Right ventricle myocardium superior (tissue), 1 donor: ENCODE measurements at regions of chr18 and their contacts with region 1.

Region 1: GRCh38 chr18:61754039-61754583 is 138.7 kb downstream of the RNF152 start:
- DNase-seq: no peak
- ATAC-seq: no peak

Region 2: DNA sequence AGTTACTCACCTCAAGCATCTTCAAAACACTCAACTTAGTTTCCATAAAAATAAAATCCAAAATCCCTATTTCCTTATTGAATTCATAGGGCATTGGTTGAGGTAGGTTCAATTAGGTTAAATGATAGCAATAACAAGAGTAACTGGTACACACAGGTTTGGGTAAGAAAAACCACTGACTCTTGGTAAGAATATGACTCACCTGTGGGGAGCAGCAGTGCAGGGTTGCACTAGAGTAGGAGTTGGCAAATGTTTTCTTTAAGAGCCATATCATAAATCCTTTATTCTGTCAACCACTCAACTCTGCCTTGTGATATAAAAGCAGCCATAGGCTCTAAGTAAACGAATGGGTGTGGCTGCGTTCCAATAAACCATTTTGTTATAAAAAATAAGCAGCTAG is 492.2 kb before region 1 on chr18:
- intact Hi-C with region 1: no loop called
- DNase-seq: no peak
- ATAC-seq: no peak

Region 3: DNA sequence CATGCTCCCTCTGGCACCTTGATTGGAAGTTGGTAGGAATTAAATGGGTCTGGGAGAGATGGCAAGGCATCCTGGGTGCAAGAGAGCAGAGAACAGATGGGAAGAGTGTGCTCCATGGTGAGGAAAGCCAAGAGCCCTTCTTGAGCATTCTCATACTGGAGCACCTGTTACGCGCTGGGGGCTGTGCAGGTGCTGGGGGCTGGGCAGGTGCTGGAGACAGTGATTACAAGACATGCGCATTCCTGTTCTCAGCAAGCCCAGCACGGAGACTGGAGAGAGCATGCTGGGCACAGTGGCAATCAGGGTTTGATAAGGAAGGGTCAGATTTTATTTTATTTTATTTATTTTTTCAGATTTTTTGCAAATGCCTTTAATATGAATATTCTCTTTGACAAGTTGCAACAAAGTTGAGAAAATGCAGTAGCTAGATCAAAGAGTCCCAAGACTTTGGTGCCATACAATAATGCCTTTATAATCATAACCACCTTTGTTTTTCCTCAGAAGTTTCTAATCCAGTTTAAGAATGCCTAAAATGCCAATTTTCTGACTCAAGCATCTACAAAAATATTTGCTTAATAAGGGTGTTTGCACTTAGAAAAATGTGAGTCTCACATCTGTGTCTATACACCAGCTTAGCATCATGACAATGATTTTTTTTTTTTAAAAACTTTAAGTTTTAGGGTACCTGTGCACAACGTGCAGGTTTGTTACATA is 54.6 kb before region 1 on chr18:
- intact Hi-C with region 1: loop called (anchors 10 kb)
- DNase-seq: no peak
- ATAC-seq: no peak